Activated naive CD4-positive, alpha-beta T cell treated with anti-CD3 and anti-CD28 coated beads for 36 hours (primary cell): ENCODE measurements at regions of chr22 and their contacts with region 1.

Region 1: DNA sequence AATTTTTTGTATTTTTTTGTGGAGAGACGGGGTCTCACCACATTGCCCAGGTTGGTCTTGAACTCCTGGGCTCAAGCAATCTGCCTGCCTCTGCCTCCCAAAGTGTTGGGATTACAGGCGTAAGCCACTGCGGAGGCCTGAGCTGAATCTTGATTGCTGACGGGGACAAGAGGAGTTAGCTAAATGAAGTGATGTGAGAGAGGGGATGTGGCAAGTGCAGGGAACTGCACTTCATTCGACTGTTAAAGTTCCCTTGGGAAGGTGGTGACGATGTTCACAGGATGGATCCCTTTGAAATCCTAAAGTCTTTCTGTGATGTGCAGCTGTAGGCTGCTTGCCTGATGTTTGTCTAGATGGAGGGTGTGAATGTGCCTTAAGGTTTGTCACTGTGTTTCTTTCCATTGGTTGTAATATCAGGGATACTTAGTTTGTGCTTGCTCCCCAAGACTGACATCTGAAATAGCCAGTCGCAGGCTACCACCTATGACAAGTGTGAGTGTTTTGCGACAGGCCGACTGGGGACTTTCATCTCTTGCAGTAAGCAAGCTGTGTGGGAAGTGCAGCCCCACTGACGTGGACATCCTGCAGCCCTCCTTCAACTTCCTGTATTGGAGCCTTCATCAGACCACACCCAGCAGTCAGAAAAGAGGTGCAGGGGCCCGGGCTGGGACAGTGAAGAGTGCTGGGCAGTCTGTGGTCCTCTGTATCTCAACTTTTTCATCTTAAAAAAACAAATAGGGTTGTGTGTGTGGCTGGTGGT is 19.6 kb upstream of the CCDC134 start:
- DNase-seq: peak; percentile 98
- H3K4me3 Mint-ChIP-seq: peak overlapping the region; percentile 86
- H3K27ac Mint-ChIP-seq: peak overlapping the region; percentile 95
- H3K4me1 Mint-ChIP-seq: peaks cover 49% of the 10 kb centered on the region
- H3K27me3 Mint-ChIP-seq: no peaks in the 10 kb centered on the region

Region 2: DNA sequence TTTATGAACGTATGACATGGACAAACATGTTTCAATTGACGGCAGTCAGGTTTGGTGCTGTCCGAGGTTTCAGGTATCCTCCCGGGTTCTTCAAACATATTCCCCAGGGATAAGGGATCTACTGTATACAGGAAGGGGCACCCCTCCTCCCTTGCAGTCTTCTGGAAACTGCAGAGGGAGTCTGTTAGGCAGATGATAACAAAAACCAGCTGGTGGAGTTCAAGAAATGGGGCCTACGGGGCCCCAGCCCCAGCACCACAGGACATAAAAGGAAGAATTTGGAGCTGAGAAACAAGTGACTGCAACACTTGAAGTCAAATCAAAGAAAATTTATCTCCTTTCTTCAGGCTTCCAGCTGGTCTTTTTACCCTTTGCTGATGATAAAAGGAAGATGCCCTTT is 124.4 kb before region 1 on chr22:
- CTCF ChIA-PET with region 1: no interaction called
- intact Hi-C with region 1: no loop called
- DNase-seq: no peak
- H3K4me3 Mint-ChIP-seq: no peak overlapping the region
- H3K27ac Mint-ChIP-seq: no peak overlapping the region
- H3K4me1 Mint-ChIP-seq: no peaks in the 10 kb centered on the region
- H3K27me3 Mint-ChIP-seq: no peaks in the 10 kb centered on the region

Region 3: DNA sequence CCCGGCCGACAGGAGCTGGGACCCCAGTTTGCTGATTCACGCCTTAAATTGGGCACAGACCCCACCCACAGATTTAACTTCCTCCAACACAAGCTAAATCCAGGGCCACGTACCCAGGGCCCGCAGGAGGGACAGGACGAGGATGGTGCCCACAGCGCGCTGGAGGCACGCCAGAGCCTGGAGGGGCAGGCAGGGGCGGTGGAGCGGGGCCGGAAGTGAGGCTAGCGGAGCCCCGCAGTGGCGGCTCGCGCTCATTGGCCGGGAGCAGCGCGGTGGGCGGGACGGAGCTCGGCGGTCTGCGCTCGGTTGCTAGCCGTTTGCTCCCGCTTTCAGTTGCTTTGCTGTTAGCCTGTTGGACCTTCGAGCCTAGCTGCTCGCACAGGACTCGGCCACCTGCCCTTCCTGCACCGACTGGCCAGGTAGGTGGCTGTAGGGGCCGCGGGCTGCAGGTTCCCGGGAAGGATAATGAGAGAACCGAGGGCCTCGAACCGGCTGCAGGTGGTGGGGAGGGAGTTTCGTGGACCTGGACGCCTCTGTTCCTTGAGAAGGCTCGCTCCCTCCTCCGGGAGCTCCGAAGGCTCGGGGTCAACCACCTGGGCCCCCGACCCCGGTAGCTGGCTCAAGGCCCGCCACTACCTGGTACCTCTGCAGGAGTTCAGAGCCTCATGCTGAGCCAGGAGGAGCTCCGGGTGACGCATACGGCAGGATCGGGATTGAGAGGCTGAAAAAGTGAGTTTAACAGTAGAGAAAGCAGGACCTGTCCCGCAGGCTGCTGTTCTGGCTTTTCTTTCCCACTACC is 19.6 kb after region 1 on chr22 and contains the start of gene CCDC134:
- CTCF ChIA-PET with region 1: interaction called, 38 read pairs
- intact Hi-C with region 1: loop called (anchors 2 kb)
- DNase-seq: peak; percentile 93
- H3K4me3 Mint-ChIP-seq: peak within 1 kb of the TSS; percentile 84
- H3K27ac Mint-ChIP-seq: peak within 1 kb of the TSS; percentile 95
- H3K4me1 Mint-ChIP-seq: peaks cover 38% of the 10 kb centered on the region
- H3K27me3 Mint-ChIP-seq: no peaks in the 10 kb centered on the region
- total RNA-seq, gene CCDC134: 17.0 to 19.3 TPM

Region 4: GRCh38 chr22:41832553-41833368 is 51.8 kb after region 1 on chr22 and contains the start of gene SREBF2:
- CTCF ChIA-PET with region 1: no interaction called
- intact Hi-C with region 1: loop called (anchors 1 kb)
- DNase-seq: peak; percentile 100
- H3K4me3 Mint-ChIP-seq: peak within 1 kb of the TSS; percentile 98
- H3K27ac Mint-ChIP-seq: peak within 1 kb of the TSS; percentile 100
- H3K4me1 Mint-ChIP-seq: peaks cover 42% of the 10 kb centered on the region
- H3K27me3 Mint-ChIP-seq: no peaks in the 10 kb centered on the region
- total RNA-seq, gene SREBF2: 143 to 147 TPM